Activated CD4-positive, alpha-beta memory T cell treated with anti-CD3 and anti-CD28 coated beads, Interleukin-2, amount 10 ng/mL, durations not matched to agents 7 days and 5 days (primary cell): ENCODE measurements at regions of chr9 and their contacts with region 1.

Region 1: DNA sequence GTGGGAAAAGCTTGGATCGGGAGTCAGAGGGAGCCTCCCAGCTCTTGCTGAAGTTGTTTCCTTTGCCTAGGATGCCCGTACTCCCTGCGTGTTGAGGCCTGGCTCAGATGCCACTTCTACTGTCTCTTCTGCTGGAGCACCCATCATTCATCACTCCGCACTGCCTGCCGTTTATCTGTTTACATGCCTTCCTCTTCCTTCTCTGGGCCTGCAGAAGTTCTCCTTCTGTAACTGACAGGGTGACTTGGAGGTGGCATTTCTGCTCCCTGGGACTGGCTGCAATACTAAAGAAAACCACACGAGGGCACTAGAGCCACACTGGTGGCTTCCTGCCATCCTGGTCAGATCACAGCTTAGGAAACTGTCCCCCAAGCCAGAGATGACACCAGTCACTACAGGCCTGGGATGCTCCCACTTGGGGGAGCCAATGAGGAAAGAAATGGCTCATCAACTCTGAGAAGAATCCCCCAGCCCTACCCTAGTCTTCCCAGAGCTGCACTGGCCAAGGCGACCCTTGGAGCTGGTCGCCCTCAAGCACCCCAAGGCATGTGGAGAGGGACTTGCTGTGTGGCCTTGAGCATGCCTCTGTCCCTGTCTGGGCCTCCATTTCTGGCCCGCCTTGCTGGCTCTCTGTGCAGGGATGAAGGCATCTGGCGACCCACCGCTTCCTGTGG is 9.7 kb upstream of the SLC25A51 start:
- DNase-seq: peak; percentile 83
- H3K4me3 Mint-ChIP-seq: no peak overlapping the region
- H3K27ac Mint-ChIP-seq: no peak overlapping the region
- H3K4me1 Mint-ChIP-seq: peaks cover 7% of the 10 kb centered on the region
- H3K27me3 Mint-ChIP-seq: no peaks in the 10 kb centered on the region

Region 2: GRCh38 chr9:37827473-37828165 is 86.0 kb before region 1 on chr9:
- CTCF ChIA-PET with region 1: no interaction called
- POLR2A ChIA-PET with region 1: no interaction called
- DNase-seq: no peak
- H3K4me3 Mint-ChIP-seq: no peak overlapping the region
- H3K27ac Mint-ChIP-seq: no peak overlapping the region
- H3K4me1 Mint-ChIP-seq: no peaks in the 10 kb centered on the region
- H3K27me3 Mint-ChIP-seq: no peaks in the 10 kb centered on the region

Region 3: DNA sequence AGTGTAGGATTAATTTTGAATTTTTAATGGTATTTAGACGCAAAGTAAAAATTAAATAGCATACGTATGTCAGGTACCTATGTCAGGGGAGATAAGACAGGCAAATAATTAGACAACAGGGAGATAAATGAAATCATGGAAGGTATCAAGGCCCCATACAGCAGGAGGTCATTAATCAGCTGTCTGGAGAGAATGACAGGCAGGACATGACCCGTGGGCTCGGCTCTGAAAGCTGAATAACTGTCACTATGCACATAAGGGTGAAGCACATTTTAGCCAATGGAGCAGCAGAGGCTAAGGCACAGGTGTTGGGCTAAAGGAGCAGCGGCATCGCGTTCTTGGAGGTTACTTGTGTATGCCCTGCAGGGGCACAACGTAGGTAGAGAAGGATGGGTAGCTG is 21.6 kb before region 1 on chr9:
- CTCF ChIA-PET with region 1: no interaction called
- POLR2A ChIA-PET with region 1: no interaction called
- DNase-seq: no peak
- H3K4me3 Mint-ChIP-seq: no peak overlapping the region
- H3K27ac Mint-ChIP-seq: no peak overlapping the region
- H3K4me1 Mint-ChIP-seq: no peaks in the 10 kb centered on the region
- H3K27me3 Mint-ChIP-seq: no peaks in the 10 kb centered on the region

Region 4: GRCh38 chr9:38088006-38088925 is 174.6 kb after region 1 on chr9:
- CTCF ChIA-PET with region 1: interaction called, 32 read pairs
- POLR2A ChIA-PET with region 1: no interaction called
- DNase-seq: peak; percentile 72
- H3K4me3 Mint-ChIP-seq: no peak overlapping the region
- H3K27ac Mint-ChIP-seq: no peak overlapping the region
- H3K4me1 Mint-ChIP-seq: peaks cover 2% of the 10 kb centered on the region
- H3K27me3 Mint-ChIP-seq: peaks cover 26% of the 10 kb centered on the region

Region 5: GRCh38 chr9:38160613-38161215 is 247.1 kb after region 1 on chr9:
- CTCF ChIA-PET with region 1: interaction called, 44 read pairs
- POLR2A ChIA-PET with region 1: no interaction called
- DNase-seq: peak; percentile 62
- H3K4me3 Mint-ChIP-seq: no peak overlapping the region
- H3K27ac Mint-ChIP-seq: no peak overlapping the region
- H3K4me1 Mint-ChIP-seq: peaks cover 3% of the 10 kb centered on the region
- H3K27me3 Mint-ChIP-seq: peaks cover 2% of the 10 kb centered on the region

Region 6: GRCh38 chr9:38227061-38227540 is 313.5 kb after region 1 on chr9:
- CTCF ChIA-PET with region 1: no interaction called
- POLR2A ChIA-PET with region 1: no interaction called
- DNase-seq: peak; percentile 62
- H3K4me3 Mint-ChIP-seq: peak overlapping the region; percentile 46
- H3K27ac Mint-ChIP-seq: peak overlapping the region; percentile 35
- H3K4me1 Mint-ChIP-seq: peaks cover 16% of the 10 kb centered on the region
- H3K27me3 Mint-ChIP-seq: peaks cover 21% of the 10 kb centered on the region